ENCODE measurements at regions of chr15 and their contacts with region 1.

Region 1: DNA sequence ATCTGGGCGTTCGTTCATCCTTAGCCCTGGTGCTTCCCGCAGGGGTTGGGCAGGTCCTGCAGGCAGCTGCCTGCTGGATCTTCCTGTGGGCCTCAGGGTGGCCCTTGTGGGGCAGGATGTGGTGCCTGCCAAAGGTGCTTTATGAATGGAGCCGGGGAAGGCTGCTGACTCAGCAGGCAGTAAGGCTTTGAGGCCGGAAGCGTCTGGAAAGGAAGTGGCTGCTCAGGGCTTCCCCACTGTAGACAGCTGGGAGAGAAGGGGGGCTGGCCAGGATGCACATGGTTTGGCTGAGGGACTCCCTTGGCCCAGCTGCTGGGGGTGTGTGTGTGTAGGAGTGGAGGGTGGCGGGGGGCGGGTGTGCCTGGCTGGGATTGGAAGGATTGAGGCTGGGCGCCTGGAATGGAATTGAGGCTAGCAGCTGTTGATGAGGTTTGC is 12.9 kb downstream of the CD276 start:
- DNase-seq: peak; percentile 44
- H3K4me3 ChIP-seq: no peak overlapping the region
- CTCF ChIP-seq: no peak

Region 2: DNA sequence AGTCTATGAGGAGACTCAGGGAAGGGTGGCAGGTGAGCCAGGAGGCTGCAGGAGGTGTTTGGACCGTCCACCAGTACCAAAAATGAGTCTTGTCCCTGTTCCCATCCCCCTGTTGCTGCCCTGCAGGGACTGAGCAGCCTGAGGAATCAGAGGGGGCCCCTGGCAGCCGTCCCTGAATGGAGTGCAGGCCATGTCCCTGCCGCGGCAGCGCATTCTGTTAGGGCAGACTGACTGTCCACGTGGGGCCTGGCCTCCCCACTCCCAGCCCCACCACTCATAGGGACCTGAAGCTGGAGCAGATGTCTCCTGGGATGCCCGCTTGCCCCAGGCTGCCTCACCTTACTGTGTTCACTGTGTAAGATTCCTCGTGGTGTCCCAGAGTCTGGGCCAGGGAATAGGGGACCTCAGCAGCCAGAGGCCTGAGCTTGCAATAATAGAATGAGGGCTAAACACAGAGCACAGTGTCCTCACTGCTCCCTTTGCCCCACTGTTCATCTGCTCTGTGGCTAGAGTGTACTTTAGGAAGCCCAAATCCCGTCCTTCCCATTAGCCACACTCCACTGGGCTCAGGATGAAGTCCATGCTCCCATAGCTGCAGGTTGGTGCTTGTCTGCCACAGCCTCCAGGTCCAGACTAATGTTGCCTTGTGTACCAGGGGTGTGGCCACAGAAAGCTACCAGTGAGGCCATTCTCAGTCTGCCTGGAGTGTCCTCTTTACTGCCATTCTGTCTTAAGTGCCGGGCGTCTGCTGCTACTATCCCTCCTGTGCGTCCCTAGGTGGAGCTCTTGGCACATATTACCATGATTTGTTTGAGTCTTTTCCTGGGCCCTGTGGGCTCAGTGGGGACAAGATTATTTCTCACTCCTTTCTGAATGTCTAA is 391.5 kb before region 1 on chr15:
- CTCF ChIA-PET with region 1: interaction called, 37 read pairs
- POLR2A ChIA-PET with region 1: no interaction called
- DNase-seq: peak; percentile 29
- H3K4me3 ChIP-seq: no peak overlapping the region
- CTCF ChIP-seq: peak; percentile 65

Region 3: GRCh38 chr15:73482166-73482565 is 214.9 kb before region 1 on chr15:
- CTCF ChIA-PET with region 1: no interaction called
- POLR2A ChIA-PET with region 1: no interaction called
- DNase-seq: no peak
- H3K4me3 ChIP-seq: no peak overlapping the region
- CTCF ChIP-seq: no peak

Region 4: GRCh38 chr15:73522011-73522410 is 175.0 kb before region 1 on chr15:
- CTCF ChIA-PET with region 1: no interaction called
- POLR2A ChIA-PET with region 1: no interaction called
- DNase-seq: no peak
- H3K4me3 ChIP-seq: no peak overlapping the region
- CTCF ChIP-seq: no peak

Region 5: DNA sequence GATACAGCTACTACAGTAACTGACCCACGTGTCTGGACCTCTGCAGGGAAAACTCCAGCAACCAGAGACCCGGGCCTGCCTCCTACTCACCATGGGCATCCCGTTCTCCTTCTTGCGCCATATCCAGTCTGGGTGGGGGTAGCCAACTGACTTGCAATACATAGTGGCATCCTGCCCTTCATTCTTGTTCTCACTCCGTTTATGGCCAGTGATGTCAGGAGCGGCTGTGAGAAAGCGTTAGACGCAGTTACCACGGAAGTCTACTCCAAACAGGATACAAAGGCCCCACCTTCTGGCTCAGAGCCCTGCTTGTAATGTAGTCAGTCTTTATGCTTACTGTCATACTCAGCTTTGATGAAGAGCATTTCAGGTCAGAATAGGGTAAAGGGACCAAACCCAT is 123.5 kb before region 1 on chr15:
- CTCF ChIA-PET with region 1: interaction called, 38 read pairs
- POLR2A ChIA-PET with region 1: no interaction called
- DNase-seq: peak; percentile 70
- H3K4me3 ChIP-seq: no peak overlapping the region
- CTCF ChIP-seq: no peak

Region 6: DNA sequence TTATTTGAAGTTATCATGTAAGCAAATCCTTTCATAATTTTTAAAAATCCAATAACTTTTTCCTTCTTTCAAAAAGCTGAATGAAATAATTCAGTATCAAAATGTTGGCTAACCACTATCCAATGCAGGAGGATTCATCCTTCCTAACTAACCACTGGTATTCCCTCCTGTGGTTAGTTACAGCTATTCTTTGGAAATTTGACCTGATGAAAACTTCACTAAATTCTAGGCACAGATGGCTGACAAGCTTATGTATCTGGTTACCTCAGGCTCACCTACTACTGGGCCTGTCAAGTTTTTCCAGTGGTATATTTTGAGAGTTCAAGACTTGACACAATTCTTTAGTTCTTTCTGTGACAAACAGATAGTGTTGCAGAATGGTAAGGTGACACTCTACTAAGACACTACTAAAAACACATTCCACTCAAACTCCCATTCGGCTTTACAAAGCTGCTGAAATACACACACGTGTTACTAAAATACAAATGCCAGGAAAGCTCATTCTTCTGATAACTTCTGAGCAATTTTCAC is 79.7 kb before region 1 on chr15:
- CTCF ChIA-PET with region 1: interaction called, 19 read pairs
- POLR2A ChIA-PET with region 1: no interaction called
- DNase-seq: no peak
- H3K4me3 ChIP-seq: no peak overlapping the region
- CTCF ChIP-seq: no peak

Region 7: DNA sequence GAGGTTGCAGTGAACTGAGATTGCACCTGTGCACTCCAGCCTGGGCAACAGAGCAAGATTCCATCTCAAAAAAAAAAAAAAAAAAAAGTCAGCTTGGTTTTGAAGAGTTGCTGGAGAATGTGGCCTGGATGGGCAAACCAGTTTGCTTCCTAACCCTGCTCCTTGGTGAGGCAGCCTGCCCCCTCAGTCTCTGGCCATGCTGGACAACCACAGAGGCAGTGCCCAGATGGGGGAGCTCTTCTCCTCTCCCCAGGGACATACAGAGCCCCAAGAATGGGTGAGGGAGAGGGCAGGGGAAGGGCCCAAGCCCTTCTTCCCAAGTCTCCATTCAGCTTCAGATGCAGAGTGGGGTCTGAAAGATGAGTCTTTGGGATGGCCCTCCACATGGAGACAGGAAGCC is 15.0 kb after region 1 on chr15:
- CTCF ChIA-PET with region 1: interaction called, 68 read pairs
- POLR2A ChIA-PET with region 1: no interaction called
- DNase-seq: no peak
- H3K4me3 ChIP-seq: no peak overlapping the region
- CTCF ChIP-seq: no peak

Region 8: DNA sequence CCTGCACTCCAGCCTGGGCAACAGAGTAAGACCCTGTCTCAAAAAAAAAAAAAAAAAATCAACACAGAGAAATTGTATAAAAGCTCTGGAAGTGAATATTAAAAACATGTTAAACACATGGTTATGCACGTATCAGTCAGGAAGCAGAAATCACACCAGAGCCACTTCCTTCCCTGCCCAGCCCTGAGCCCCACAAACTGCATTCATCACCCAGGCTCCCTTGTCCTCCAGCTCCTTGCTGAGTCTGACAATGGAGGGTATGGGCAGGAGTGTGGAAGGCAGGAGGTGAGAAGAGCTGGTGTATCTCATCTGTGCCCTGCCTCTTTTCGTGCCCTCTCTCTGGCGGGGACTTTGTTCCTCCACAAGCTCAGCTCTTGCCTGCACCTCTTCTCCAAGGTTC is 217.1 kb after region 1 on chr15:
- CTCF ChIA-PET with region 1: no interaction called
- POLR2A ChIA-PET with region 1: no interaction called
- DNase-seq: no peak
- H3K4me3 ChIP-seq: no peak overlapping the region
- CTCF ChIP-seq: no peak

Region 9: DNA sequence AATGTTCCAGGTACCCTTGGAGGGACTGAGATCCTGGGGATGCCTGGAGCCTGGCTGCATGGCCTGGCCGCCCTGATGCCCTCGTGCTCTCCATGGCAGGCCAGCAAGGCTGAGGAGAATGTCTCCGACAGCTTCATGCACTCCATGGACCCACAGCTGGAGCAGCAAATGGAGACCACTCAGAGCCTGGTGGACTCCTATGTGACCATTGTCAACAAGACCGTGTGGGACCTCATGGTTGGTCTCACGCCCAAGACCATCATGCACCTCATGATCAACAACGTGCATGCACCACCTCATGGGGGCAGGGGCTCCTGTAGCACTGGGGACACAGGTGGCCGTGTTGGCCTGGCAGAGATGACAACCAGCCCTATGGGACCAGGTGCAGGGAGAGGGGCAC is 365.6 kb after region 1 on chr15:
- CTCF ChIA-PET with region 1: no interaction called
- POLR2A ChIA-PET with region 1: no interaction called
- DNase-seq: no peak
- H3K4me3 ChIP-seq: no peak overlapping the region
- CTCF ChIP-seq: no peak